ENCODE measurements at regions of chr4 and their contacts with region 1.

Region 1: GRCh38 chr4:135724426-135724825 is 1522.8 kb upstream of the PABPC4L start:
- DNase-seq: peak; percentile 64
- ATAC-seq: peak; percentile 69
- H3K4me3 ChIP-seq: peak overlapping the region; percentile 3; the same call in 1 of the 2 replicates
- H3K27ac ChIP-seq: peak overlapping the region; percentile 96
- H3K4me1 ChIP-seq: peaks cover 19% of the 10 kb centered on the region
- H3K27me3 ChIP-seq: no peaks in the 10 kb centered on the region
- CTCF ChIP-seq: no peak

Region 2: DNA sequence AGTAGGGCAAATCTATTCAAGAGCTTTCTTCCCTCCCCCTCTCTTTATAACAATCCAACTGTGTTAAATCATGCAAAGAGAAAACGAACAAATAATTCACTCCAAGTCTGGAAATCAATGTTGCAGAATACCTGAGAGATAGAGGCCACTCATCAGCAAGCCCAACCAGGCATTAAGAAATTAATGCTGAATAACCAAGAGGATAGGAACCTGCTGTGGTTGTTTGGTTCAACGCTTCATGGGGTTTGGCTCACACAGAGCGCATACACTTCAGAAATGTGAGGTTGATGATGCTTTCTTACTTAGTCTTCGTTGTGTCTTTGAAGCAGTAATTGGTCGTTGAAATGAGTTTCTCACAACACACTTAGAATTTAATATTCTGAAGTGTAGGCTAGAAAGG is 17.2 kb after region 1 on chr4:
- CTCF ChIA-PET with region 1: no interaction called
- POLR2A ChIA-PET with region 1: no interaction called
- intact Hi-C with region 1: loop called (anchors 1 kb)
- DNase-seq: no peak
- ATAC-seq: no peak
- H3K4me3 ChIP-seq: no peak overlapping the region
- H3K27ac ChIP-seq: no peak overlapping the region
- H3K4me1 ChIP-seq: peaks cover 9% of the 10 kb centered on the region; the same call in 1 of the 2 replicates
- H3K27me3 ChIP-seq: no peaks in the 10 kb centered on the region
- CTCF ChIP-seq: no peak

Region 3: GRCh38 chr4:135927651-135928050 is 203.2 kb after region 1 on chr4:
- CTCF ChIA-PET with region 1: no interaction called
- POLR2A ChIA-PET with region 1: no interaction called
- intact Hi-C with region 1: loop called (anchors 1 kb)
- DNase-seq: peak; percentile 26
- ATAC-seq: peak; percentile 77
- H3K4me3 ChIP-seq: no peak overlapping the region
- H3K27ac ChIP-seq: peak overlapping the region; percentile 44
- H3K4me1 ChIP-seq: 0 out of 2 replicates have a peak, but pooled peaks cover 9% of the 10 kb centered on the region
- H3K27me3 ChIP-seq: no peaks in the 10 kb centered on the region
- CTCF ChIP-seq: no peak